ENCODE measurements at regions of chr15 and their contacts with region 1.

Region 1: GRCh38 chr15:52071546-52071945 is 41.0 kb downstream of the BCL2L10 start:
- DNase-seq: peak; percentile 87
- H3K4me3 Mint-ChIP-seq: peak overlapping the region; percentile 26
- H3K27ac Mint-ChIP-seq: peak overlapping the region; percentile 66
- H3K4me1 Mint-ChIP-seq: peaks cover 51% of the 10 kb centered on the region
- H3K27me3 Mint-ChIP-seq: no peaks in the 10 kb centered on the region
- CTCF ChIP-seq: no peak

Region 2: DNA sequence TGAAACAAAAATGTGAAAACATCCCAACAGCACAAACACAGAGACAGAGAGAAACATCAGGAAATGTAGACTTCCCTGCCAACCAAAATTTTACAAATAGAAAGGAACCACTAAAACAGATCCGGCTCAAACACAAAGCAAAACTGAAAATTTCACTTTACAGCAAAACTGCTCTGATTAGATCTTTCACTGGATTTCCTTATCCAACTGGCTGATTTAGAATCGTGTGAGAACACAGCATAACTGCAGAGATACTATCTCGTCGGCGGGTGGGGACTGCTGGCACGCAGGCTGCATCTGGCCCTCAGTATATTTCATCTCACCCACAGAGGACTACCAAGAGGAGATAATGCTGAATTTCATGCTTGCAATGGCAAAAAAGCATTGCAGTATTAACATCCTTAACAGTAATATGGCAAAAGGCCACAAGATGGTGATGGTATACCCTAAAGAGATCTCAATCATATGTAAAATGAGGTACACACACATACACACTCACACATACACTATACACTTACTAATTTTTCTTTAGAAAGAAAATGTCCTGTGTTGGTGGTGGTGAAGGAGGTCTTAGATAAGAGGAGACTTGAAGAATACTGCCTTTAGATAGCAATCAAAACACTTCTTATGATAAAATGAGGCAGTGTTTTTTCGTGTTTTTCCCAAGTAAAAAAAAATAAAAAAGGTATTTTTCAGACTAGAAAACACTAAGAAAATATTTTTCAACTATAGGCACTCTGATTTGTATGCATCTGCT is 89.4 kb before region 1 on chr15:
- CTCF ChIA-PET with region 1: interaction called, 18 read pairs
- POLR2A ChIA-PET with region 1: interaction called, 31 read pairs
- intact Hi-C with region 1: no loop called
- DNase-seq: peak; percentile 78
- H3K4me3 Mint-ChIP-seq: peak overlapping the region; percentile 31
- H3K27ac Mint-ChIP-seq: peak overlapping the region; percentile 77
- H3K4me1 Mint-ChIP-seq: peaks cover 12% of the 10 kb centered on the region
- H3K27me3 Mint-ChIP-seq: no peaks in the 10 kb centered on the region
- CTCF ChIP-seq: peak; percentile 82

Region 3: GRCh38 chr15:52031566-52031965 is 40.0 kb before region 1 on chr15:
- CTCF ChIA-PET with region 1: interaction called, 4 read pairs
- POLR2A ChIA-PET with region 1: interaction called, 546 read pairs
- intact Hi-C with region 1: no loop called
- DNase-seq: peak; percentile 95
- H3K4me3 Mint-ChIP-seq: no peak overlapping the region
- H3K27ac Mint-ChIP-seq: peak overlapping the region; percentile 31
- H3K4me1 Mint-ChIP-seq: peaks cover 16% of the 10 kb centered on the region
- H3K27me3 Mint-ChIP-seq: no peaks in the 10 kb centered on the region
- CTCF ChIP-seq: no peak

Region 4: GRCh38 chr15:52050416-52050815 is 21.1 kb before region 1 on chr15:
- CTCF ChIA-PET with region 1: interaction called, 16 read pairs
- POLR2A ChIA-PET with region 1: interaction called, 82 read pairs
- intact Hi-C with region 1: no loop called
- DNase-seq: peak; percentile 28
- H3K4me3 Mint-ChIP-seq: no peak overlapping the region
- H3K27ac Mint-ChIP-seq: no peak overlapping the region
- H3K4me1 Mint-ChIP-seq: peaks cover 5% of the 10 kb centered on the region
- H3K27me3 Mint-ChIP-seq: no peaks in the 10 kb centered on the region
- CTCF ChIP-seq: no peak

Region 5: GRCh38 chr15:52103217-52104207 is 32.0 kb after region 1 on chr15:
- CTCF ChIA-PET with region 1: interaction called, 4 read pairs
- POLR2A ChIA-PET with region 1: interaction called, 214 read pairs
- intact Hi-C with region 1: no loop called
- DNase-seq: peak; percentile 95
- H3K4me3 Mint-ChIP-seq: peak overlapping the region; percentile 20
- H3K27ac Mint-ChIP-seq: peak overlapping the region; percentile 92
- H3K4me1 Mint-ChIP-seq: peaks cover 36% of the 10 kb centered on the region
- H3K27me3 Mint-ChIP-seq: no peaks in the 10 kb centered on the region
- CTCF ChIP-seq: no peak

Region 6: GRCh38 chr15:52280326-52281084 is 209.0 kb after region 1 on chr15:
- CTCF ChIA-PET with region 1: no interaction called
- POLR2A ChIA-PET with region 1: no interaction called
- intact Hi-C with region 1: no loop called
- DNase-seq: no peak
- H3K4me3 Mint-ChIP-seq: no peak overlapping the region
- H3K27ac Mint-ChIP-seq: no peak overlapping the region
- H3K4me1 Mint-ChIP-seq: no peaks in the 10 kb centered on the region
- H3K27me3 Mint-ChIP-seq: no peaks in the 10 kb centered on the region
- CTCF ChIP-seq: no peak